Activated CD4-positive, alpha-beta T cell treated with anti-CD3 and anti-CD28 coated beads, Interleukin-2, amount 10 ng/mL, durations not matched to agents 24 days and 14 days (primary cell): ENCODE measurements at regions of chr15 and their contacts with region 1.

Region 1: GRCh38 chr15:67024314-67024997 is 40.9 kb upstream of the SMAD3 start:
- DNase-seq: no peak
- H3K4me3 Mint-ChIP-seq: peak overlapping the region; percentile 49
- H3K27ac Mint-ChIP-seq: peak overlapping the region; percentile 64
- H3K4me1 Mint-ChIP-seq: peaks cover 28% of the 10 kb centered on the region
- H3K27me3 Mint-ChIP-seq: no peaks in the 10 kb centered on the region

Region 2: GRCh38 chr15:67043939-67044771 is 19.7 kb after region 1 on chr15:
- intact Hi-C with region 1: loop called (anchors 2 kb)
- DNase-seq: no peak
- H3K4me3 Mint-ChIP-seq: no peak overlapping the region
- H3K27ac Mint-ChIP-seq: no peak overlapping the region
- H3K4me1 Mint-ChIP-seq: peaks cover 28% of the 10 kb centered on the region
- H3K27me3 Mint-ChIP-seq: no peaks in the 10 kb centered on the region

Region 3: GRCh38 chr15:67175643-67176071 is 151.2 kb after region 1 on chr15:
- intact Hi-C with region 1: no loop called
- DNase-seq: peak; percentile 71
- H3K4me3 Mint-ChIP-seq: peak overlapping the region; percentile 24
- H3K27ac Mint-ChIP-seq: peak overlapping the region; percentile 82
- H3K4me1 Mint-ChIP-seq: peaks cover 63% of the 10 kb centered on the region
- H3K27me3 Mint-ChIP-seq: no peaks in the 10 kb centered on the region

Region 4: DNA sequence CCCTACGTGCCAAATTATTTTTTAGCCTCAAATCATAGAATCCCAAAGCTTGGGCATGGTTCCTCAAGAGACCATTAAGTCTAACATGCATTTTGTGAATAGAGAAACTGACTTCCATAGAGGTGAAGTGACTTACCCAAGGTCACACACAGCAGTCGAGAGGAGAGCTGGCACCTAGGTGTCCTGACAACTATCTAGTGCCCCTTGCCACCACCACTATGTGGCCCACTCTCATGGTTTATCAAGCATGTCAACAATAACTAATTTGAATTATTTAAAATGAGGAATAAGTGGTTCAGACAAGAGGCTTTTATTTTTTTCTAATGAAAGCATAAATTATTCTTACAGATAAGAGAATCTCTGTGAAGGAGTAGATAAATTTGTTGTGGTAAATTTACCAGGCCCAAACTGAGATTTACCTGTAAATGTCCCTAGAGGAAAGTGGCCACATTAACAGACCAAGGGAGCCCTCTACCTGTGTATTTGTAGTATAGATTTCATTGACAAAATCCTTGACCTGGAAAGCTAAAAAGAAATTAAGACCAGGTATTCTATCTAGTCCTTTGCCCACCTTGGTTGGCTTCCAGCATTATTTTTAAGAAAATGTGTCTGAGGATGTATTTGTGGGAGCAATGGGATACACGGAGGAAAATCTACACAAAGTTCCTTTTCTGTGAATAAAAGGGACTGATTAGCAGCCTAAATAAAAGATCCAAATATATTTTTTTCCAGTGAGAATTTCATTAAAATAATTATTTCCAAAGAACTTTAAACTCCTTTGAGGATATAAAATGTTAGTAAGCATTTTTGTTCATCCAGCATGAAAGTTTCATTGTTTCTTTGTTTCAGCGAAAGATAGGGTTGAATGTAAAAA is 279.3 kb after region 1 on chr15:
- intact Hi-C with region 1: loop called (anchors 1 kb)
- DNase-seq: peak; percentile 73
- H3K4me3 Mint-ChIP-seq: no peak overlapping the region
- H3K27ac Mint-ChIP-seq: no peak overlapping the region
- H3K4me1 Mint-ChIP-seq: peaks cover 4% of the 10 kb centered on the region
- H3K27me3 Mint-ChIP-seq: peaks cover 12% of the 10 kb centered on the region